ENCODE measurements at regions of chr6 and their contacts with region 1.

Region 1: DNA sequence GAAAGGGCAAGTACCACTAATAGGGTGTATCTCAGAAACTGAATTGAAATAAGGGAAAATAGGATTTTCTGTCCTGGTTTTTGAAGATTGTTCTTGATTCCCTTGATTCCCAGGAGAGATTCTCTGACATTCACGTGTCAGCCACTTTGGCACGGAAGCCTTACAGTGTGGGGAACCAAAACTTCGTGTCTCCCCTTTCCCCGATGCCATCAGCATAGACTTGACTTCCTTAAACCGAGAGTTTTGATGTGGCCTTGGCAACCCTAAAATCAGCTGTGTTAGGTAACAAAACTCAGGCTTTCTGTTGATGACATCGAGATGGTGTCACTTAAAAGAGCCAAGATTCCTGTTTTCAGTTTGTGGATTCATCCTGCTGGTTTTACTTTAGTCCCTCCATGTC is 7.5 kb downstream of the HMGN4 start:
- DNase-seq: no peak
- H3K4me3 ChIP-seq: no peak overlapping the region
- H3K27ac ChIP-seq: no peak overlapping the region
- H3K4me1 ChIP-seq: peaks cover 0 to 11% (median 1%) of the 10 kb centered on the region in 4 donors
- H3K27me3 ChIP-seq: no peaks in the 10 kb centered on the region
- CTCF ChIP-seq: no peak
- EP300 ChIP-seq: no peak
- POLR2A ChIP-seq: no peak

Region 2: DNA sequence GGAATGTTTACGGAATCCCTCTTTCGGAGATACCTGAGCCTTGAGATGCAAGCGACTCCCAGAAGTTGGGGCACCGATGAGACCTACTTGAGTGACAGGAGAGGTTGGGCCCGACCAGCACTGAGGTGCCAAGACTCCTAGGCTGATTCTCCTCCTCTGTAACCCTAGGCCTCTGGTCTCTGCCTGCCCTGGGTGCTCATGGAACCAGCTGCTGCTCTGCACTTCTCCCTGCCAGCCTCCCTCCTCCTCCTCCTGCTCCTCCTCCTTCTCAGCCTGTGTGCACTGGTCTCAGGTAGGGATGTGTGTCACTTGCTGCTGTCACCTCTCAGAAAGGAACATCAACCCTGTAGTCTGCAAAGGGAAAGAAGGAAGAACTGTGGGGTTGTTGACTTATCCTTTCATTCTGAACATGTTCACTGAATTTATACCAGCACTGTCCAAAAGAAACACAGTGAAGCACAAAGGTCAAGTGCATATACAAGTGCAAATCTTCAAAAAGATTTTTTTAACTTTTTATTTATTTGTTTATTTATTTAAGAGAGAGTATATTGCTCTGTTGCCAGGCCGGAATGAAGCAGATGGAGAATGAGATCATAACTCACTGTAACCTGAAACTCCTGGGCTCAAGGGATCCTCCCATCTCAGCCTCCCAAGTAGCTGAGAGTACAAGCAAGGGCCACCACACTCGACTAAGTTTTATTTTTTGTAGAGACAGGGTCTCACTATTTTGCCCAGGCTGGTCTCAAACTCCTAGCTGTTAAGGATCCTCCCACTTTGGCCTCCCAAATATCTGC is 161.8 kb before region 1 on chr6:
- in situ Hi-C with region 1: no loop called
- intact Hi-C with region 1: loop called (anchors 5 kb)
- DNase-seq: peak; percentile 50
- H3K4me3 ChIP-seq: peak overlapping the region; percentile 36 to 88 (median 70)
- H3K27ac ChIP-seq: peak overlapping the region; percentile 74 to 85 (median 80)
- H3K4me1 ChIP-seq: peaks cover 0 to 17% (median 9%) of the 10 kb centered on the region in 4 donors
- H3K27me3 ChIP-seq: no peaks in the 10 kb centered on the region
- CTCF ChIP-seq: no peak
- EP300 ChIP-seq: no peak
- POLR2A ChIP-seq: peak; percentile 21